Tibial artery (tissue), 4 donors: ENCODE measurements at regions of chr14 and their contacts with region 1.

Region 1: DNA sequence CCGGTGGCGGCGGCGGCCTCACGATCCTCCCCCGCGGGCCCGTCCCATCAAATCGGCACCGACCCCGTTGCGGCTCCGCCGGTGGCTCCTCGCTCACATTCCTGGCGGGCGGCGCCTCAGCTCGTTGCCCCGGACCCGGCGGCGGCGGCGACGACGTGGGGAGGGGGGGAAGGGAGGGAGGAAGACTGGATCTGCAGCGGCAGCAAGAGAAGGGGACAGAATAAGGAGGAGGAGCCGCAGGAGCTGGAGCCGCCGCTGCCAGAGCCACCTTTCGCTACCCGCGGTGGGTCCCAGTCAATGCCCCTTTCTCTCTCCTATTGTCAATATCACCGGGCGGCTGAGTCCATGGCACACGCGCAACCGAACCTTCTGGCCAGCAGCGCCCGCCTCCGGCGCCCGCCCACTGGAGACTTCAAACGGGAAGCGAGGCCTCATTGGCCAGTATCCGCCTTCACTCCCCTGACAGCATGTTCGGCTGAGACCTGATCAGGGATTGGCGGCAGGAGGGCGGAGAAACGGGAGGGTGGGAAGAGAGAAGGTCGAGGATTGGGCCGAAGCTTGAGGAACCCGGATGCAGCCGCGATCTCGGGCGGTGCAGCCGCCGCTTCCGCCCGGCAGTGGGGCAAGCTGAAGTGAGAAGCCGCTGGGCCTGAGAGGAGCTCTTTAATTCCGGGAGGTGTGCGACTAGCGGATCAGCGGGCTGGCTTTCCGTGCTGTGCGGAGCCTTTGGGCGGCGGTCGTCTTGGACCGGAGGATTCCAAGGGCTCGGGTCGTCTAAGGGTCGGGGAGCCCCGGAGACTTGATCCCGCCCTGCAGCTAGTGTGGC is at the start of gene PPP2R5E:
- DNase-seq: peak; percentile 99
- H3K4me3 ChIP-seq: peak within 1 kb of the TSS; percentile 88 to 89
- H3K27ac ChIP-seq: peak within 1 kb of the TSS; percentile 90 to 93
- H3K4me1 ChIP-seq: peaks cover 0 to 30% (median 7%) of the 10 kb centered on the region in 4 donors
- H3K27me3 ChIP-seq: no peaks in the 10 kb centered on the region
- CTCF ChIP-seq: peak in 1 of 2 experiments; percentile 24

Region 2: DNA sequence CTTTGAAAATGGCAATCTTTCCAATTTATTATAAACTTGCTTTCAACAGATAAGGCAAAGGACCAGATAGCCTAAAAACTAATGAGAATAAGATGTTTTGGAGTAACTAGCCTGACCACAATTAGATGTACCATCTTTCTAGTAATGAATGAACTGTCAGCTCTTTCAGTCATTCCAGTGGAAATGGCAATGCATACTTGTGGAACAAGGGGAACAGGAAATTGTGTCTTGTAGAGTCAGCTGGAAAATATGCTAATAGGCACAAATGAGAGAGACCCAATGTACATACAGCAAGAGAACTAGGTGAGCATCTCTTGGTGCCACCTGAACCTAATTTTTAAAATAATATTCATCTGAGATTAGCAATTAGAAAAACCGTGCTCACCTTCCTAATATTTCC is 148.4 kb before region 1 on chr14:
- intact Hi-C with region 1: loop called (anchors 2 kb)
- DNase-seq: no peak
- H3K4me3 ChIP-seq: no peak overlapping the region
- H3K27ac ChIP-seq: no peak overlapping the region
- H3K4me1 ChIP-seq: no peaks in the 10 kb centered on the region
- H3K27me3 ChIP-seq: no peaks in the 10 kb centered on the region
- CTCF ChIP-seq: no peak

Region 3: GRCh38 chr14:63493246-63493645 is 50.0 kb before region 1 on chr14:
- intact Hi-C with region 1: loop called (anchors 10 kb)
- DNase-seq: no peak
- H3K4me3 ChIP-seq: no peak overlapping the region
- H3K27ac ChIP-seq: peak overlapping the region in 1 of 2 donors; percentile 10
- H3K4me1 ChIP-seq: peaks cover 0 to 86% (median 48%) of the 10 kb centered on the region in 4 donors
- H3K27me3 ChIP-seq: no peaks in the 10 kb centered on the region
- CTCF ChIP-seq: no peak

Region 4: GRCh38 chr14:63641473-63642228 is 98.4 kb after region 1 on chr14 and contains the start of gene WDR89:
- intact Hi-C with region 1: loop called (anchors 5 kb)
- DNase-seq: peak; percentile 96 to 99
- H3K4me3 ChIP-seq: peak within 1 kb of the TSS; percentile 57 to 73
- H3K27ac ChIP-seq: peak within 1 kb of the TSS; percentile 89 to 90
- H3K4me1 ChIP-seq: peaks cover 0 to 12% (median 4%) of the 10 kb centered on the region in 4 donors
- H3K27me3 ChIP-seq: no peaks in the 10 kb centered on the region
- CTCF ChIP-seq: peak; percentile 67 to 83

Region 5: GRCh38 chr14:63727774-63728728 is 184.8 kb after region 1 on chr14 and contains the start of gene SGPP1:
- intact Hi-C with region 1: no loop called
- DNase-seq: peak; percentile 69 to 83
- H3K4me3 ChIP-seq: peak within 1 kb of the TSS; percentile 77 to 94
- H3K27ac ChIP-seq: peak within 1 kb of the TSS; percentile 81 to 86
- H3K4me1 ChIP-seq: peaks cover 0 to 22% (median 15%) of the 10 kb centered on the region in 4 donors
- H3K27me3 ChIP-seq: no peaks in the 10 kb centered on the region
- CTCF ChIP-seq: peak; percentile 9 to 35